ENCODE measurements at regions of chr1 and their contacts with region 1.

Region 1: GRCh38 chr1:159804924-159805323 is 2.8 kb downstream of the FCRL6 start:
- DNase-seq: no peak
- H3K4me3 ChIP-seq: no peak overlapping the region
- CTCF ChIP-seq: no peak
- POLR2A ChIP-seq: no peak

Region 2: GRCh38 chr1:159250638-159251216 is 554.2 kb before region 1 on chr1:
- intact Hi-C with region 1: loop called (anchors 5 kb)
- DNase-seq: no peak
- H3K4me3 ChIP-seq: no peak overlapping the region
- CTCF ChIP-seq: no peak
- POLR2A ChIP-seq: no peak

Region 3: GRCh38 chr1:159884296-159884695 is 79.4 kb after region 1 on chr1:
- intact Hi-C with region 1: loop called (anchors 2 kb)
- DNase-seq: no peak
- H3K4me3 ChIP-seq: no peak overlapping the region
- CTCF ChIP-seq: no peak
- POLR2A ChIP-seq: no peak